ENCODE measurements at regions of chrX and their contacts with region 1.

Region 1: DNA sequence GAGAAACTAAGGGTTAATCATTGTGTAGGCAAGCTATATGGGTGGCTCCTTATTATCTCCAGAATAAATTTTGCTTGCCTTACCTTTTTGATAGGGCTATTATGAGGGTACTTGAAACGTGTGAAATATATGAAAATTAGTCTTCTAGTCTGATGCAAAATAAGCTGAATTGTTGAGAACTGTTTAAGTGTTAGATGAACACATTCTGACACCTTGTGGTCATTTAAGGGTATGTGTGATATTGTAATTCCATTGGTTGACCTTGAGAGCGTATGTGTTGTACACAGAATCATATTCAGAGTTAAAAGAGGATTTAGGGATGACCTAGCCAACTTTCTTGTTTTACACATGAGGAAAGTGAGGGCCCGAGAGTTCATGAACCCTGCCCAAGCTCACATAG is 44.6 kb upstream of the LINC00632 start:
- DNase-seq: peak; percentile 59
- H3K4me3 Mint-ChIP-seq: no peak overlapping the region
- H3K27ac Mint-ChIP-seq: no peak overlapping the region
- H3K4me1 Mint-ChIP-seq: peaks cover 8% of the 10 kb centered on the region
- H3K27me3 Mint-ChIP-seq: peaks cover 33% of the 10 kb centered on the region
- CTCF ChIP-seq: peak; percentile 45

Region 2: GRCh38 chrX:138756234-138756633 is 1908.7 kb before region 1 on chrX:
- CTCF ChIA-PET with region 1: no interaction called
- POLR2A ChIA-PET with region 1: no interaction called
- intact Hi-C with region 1: loop called (anchors 5 kb)
- DNase-seq: peak; percentile 62
- H3K4me3 Mint-ChIP-seq: no peak overlapping the region
- H3K27ac Mint-ChIP-seq: no peak overlapping the region
- H3K4me1 Mint-ChIP-seq: no peaks in the 10 kb centered on the region
- H3K27me3 Mint-ChIP-seq: no peaks in the 10 kb centered on the region
- CTCF ChIP-seq: peak; percentile 29

Region 3: DNA sequence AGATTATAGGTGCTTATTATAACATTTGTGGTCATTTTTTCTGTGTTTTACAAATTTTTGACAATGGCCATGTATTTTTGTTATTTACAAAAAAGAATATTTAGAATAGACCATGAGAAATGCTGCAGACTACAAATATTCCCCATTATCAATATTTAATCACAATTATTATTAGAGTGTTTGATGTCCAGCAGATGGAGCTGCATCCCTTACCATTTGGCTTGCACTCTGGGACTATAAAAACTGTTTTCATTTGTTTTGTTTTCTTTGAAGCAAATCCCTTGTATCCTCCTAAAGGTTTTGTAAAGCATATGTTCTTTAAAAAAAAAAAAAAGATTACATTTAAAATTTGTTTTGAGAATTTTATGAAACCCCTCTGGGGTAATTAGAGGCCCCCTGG is 614.0 kb before region 1 on chrX:
- CTCF ChIA-PET with region 1: interaction called, 221 read pairs
- POLR2A ChIA-PET with region 1: interaction called, 3 read pairs
- intact Hi-C with region 1: loop called (anchors 1 kb)
- DNase-seq: peak; percentile 35
- H3K4me3 Mint-ChIP-seq: no peak overlapping the region
- H3K27ac Mint-ChIP-seq: no peak overlapping the region
- H3K4me1 Mint-ChIP-seq: no peaks in the 10 kb centered on the region
- H3K27me3 Mint-ChIP-seq: peaks cover 39% of the 10 kb centered on the region
- CTCF ChIP-seq: peak; percentile 34

Region 4: GRCh38 chrX:140141444-140142029 is 523.4 kb before region 1 on chrX:
- CTCF ChIA-PET with region 1: interaction called, 19 read pairs
- POLR2A ChIA-PET with region 1: no interaction called
- intact Hi-C with region 1: loop called (anchors 5 kb)
- DNase-seq: peak; percentile 73
- H3K4me3 Mint-ChIP-seq: no peak overlapping the region
- H3K27ac Mint-ChIP-seq: no peak overlapping the region
- H3K4me1 Mint-ChIP-seq: no peaks in the 10 kb centered on the region
- H3K27me3 Mint-ChIP-seq: no peaks in the 10 kb centered on the region
- CTCF ChIP-seq: peak; percentile 44

Region 5: GRCh38 chrX:140572724-140573123 is 92.2 kb before region 1 on chrX:
- CTCF ChIA-PET with region 1: interaction called, 52 read pairs
- POLR2A ChIA-PET with region 1: interaction called, 3 read pairs
- intact Hi-C with region 1: loop called (anchors 1 kb)
- DNase-seq: peak; percentile 68
- H3K4me3 Mint-ChIP-seq: no peak overlapping the region
- H3K27ac Mint-ChIP-seq: no peak overlapping the region
- H3K4me1 Mint-ChIP-seq: peaks cover 6% of the 10 kb centered on the region
- H3K27me3 Mint-ChIP-seq: peaks cover 29% of the 10 kb centered on the region
- CTCF ChIP-seq: peak; percentile 61

Region 6: DNA sequence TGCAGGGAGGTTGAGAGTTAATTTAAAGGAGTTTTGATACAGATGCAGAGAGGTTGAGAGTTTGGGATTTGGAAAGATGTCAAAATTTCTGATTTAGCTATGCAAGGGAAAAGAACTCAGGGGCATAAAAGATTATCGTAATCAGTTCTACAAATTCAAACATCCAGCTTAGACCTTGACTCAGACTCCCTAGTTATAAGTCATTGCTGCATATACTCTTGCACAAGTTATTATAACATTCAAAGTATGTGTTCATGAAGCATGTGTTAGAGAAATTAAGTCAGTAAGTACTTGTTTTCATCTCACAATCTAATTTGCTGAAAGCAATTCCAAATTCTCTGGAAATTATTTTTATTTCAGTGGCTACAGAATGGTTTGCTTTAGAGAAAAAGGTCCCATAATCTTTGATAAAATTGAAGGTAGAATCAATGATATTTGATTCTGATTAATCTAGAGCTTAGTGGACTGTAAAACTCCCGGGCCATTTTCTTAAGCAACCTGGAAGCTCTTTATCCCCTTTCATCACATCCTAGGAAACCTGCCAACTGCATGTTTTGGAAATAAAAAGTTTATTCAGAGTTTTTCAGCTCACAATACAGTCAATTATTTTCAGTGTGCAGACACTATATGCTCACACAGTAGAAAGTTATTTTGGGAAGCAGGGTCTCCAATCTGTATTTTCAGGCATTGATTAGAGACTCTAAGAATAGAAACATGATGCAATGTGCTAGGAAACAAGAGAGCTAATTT is 710.2 kb after region 1 on chrX:
- CTCF ChIA-PET with region 1: no interaction called
- POLR2A ChIA-PET with region 1: no interaction called
- intact Hi-C with region 1: no loop called
- DNase-seq: peak; percentile 31
- H3K4me3 Mint-ChIP-seq: no peak overlapping the region
- H3K27ac Mint-ChIP-seq: no peak overlapping the region
- H3K4me1 Mint-ChIP-seq: peaks cover 10% of the 10 kb centered on the region
- H3K27me3 Mint-ChIP-seq: no peaks in the 10 kb centered on the region
- CTCF ChIP-seq: no peak

Measured in MCF 10A (cell line).